B cell (primary cell): ENCODE measurements at regions of chr12 and their contacts with region 1.

Region 1: GRCh38 chr12:94817695-94818075 is 167.3 kb upstream of the TMCC3 start:
- DNase-seq: no peak
- ATAC-seq: no peak
- H3K4me3 ChIP-seq: peak overlapping the region; percentile 39 to 66 (median 51)
- H3K4me3 Mint-ChIP-seq: peak overlapping the region; percentile 83
- H3K27ac ChIP-seq: peak overlapping the region; percentile 86 to 90
- H3K27ac Mint-ChIP-seq: peak overlapping the region; percentile 95
- H3K4me1 ChIP-seq: peaks cover 60 to 62% of the 10 kb centered on the region in 2 donors
- H3K4me1 Mint-ChIP-seq: peaks cover 61% of the 10 kb centered on the region
- H3K27me3 ChIP-seq: no peaks in the 10 kb centered on the region
- H3K27me3 Mint-ChIP-seq: no peaks in the 10 kb centered on the region
- CTCF ChIP-seq: no peak

Region 2: DNA sequence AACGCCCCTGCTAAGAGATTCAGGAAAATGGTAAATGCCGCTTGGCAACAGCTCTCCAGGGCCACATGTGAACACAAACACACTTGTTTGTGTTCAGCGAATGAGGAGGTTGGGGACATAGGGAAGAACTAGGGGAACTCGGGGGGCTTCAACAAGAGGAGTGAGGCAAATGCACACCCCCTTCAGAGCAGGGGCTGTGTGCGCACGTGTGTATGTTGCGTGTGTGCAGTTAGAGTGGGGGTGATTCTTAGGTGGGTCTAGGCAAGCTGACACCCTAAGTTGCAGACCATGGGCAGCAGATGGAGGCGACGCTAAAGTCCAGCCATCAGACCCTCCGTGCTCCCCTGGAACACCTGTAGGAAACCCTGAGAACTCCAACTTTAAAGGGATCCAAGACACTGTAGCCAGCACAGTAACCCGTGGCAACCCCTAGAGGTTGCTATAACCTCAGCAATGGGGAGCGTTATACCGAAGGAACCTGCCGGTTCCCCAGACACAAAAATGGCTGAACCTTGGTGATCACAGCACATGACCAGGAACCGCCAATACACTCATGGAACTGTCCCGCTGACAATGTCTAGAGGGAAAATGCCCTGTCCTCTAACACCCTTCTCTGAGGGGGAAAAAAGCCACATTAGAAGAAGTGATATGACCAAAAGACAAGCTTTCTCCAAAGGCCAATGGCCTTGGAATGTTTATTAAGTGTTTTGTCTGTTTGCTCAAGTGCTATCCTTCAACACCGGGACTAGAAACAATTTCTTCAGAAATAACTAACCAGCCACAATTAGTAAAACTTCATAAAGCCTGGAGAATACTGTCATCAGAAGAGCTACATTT is 271.5 kb before region 1 on chr12:
- CTCF ChIA-PET with region 1: no interaction called
- POLR2A ChIA-PET with region 1: no interaction called
- intact Hi-C with region 1: no loop called
- DNase-seq: peak; percentile 18
- ATAC-seq: peak; percentile 43
- H3K4me3 ChIP-seq: no peak overlapping the region
- H3K4me3 Mint-ChIP-seq: no peak overlapping the region
- H3K27ac ChIP-seq: no peak overlapping the region
- H3K27ac Mint-ChIP-seq: no peak overlapping the region
- H3K4me1 ChIP-seq: no peaks in the 10 kb centered on the region
- H3K4me1 Mint-ChIP-seq: no peaks in the 10 kb centered on the region
- H3K27me3 ChIP-seq: no peaks in the 10 kb centered on the region
- H3K27me3 Mint-ChIP-seq: no peaks in the 10 kb centered on the region
- CTCF ChIP-seq: no peak

Region 3: GRCh38 chr12:94660436-94660835 is 157.2 kb before region 1 on chr12:
- CTCF ChIA-PET with region 1: no interaction called
- POLR2A ChIA-PET with region 1: no interaction called
- intact Hi-C with region 1: no loop called
- DNase-seq: no peak
- ATAC-seq: no peak
- H3K4me3 ChIP-seq: no peak overlapping the region
- H3K4me3 Mint-ChIP-seq: no peak overlapping the region
- H3K27ac ChIP-seq: no peak overlapping the region
- H3K27ac Mint-ChIP-seq: no peak overlapping the region
- H3K4me1 ChIP-seq: peaks cover 7 to 11% of the 10 kb centered on the region in 2 donors
- H3K4me1 Mint-ChIP-seq: peaks cover 12% of the 10 kb centered on the region
- H3K27me3 ChIP-seq: no peaks in the 10 kb centered on the region
- H3K27me3 Mint-ChIP-seq: no peaks in the 10 kb centered on the region
- CTCF ChIP-seq: no peak

Region 4: DNA sequence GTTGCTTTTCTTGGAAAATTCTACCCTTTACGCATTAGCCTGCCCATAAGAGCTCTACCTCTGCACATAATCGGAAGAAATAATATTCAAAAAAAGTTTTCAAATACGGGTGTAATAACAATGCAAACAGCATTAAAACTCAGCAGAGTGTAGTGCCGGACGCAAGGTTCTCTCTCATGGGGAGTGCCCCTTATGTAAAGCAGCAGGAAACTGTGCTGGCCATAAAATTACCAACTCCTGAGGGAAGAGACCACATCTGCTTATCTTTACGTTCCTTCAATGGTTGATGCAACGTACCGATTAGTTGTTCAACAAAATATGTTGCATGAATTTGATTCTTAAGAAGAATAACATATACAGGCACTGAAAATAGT is 48.7 kb before region 1 on chr12:
- CTCF ChIA-PET with region 1: interaction called, 7 read pairs
- POLR2A ChIA-PET with region 1: interaction called, 4 read pairs
- intact Hi-C with region 1: loop called (anchors 1 kb)
- DNase-seq: peak; percentile 74
- ATAC-seq: peak; percentile 89
- H3K4me3 ChIP-seq: peak overlapping the region; percentile 36 to 60 (median 54)
- H3K4me3 Mint-ChIP-seq: peak overlapping the region; percentile 90
- H3K27ac ChIP-seq: peak overlapping the region; percentile 69 to 70
- H3K27ac Mint-ChIP-seq: peak overlapping the region; percentile 82
- H3K4me1 ChIP-seq: peaks cover 50 to 54% of the 10 kb centered on the region in 2 donors
- H3K4me1 Mint-ChIP-seq: peaks cover 63% of the 10 kb centered on the region
- H3K27me3 ChIP-seq: no peaks in the 10 kb centered on the region
- H3K27me3 Mint-ChIP-seq: no peaks in the 10 kb centered on the region
- CTCF ChIP-seq: no peak

Region 5: GRCh38 chr12:94831081-94831751 is 13.5 kb after region 1 on chr12:
- CTCF ChIA-PET with region 1: interaction called, 7 read pairs
- POLR2A ChIA-PET with region 1: interaction called, 3 read pairs
- intact Hi-C with region 1: loop called (anchors 1 kb)
- DNase-seq: peak; percentile 86
- ATAC-seq: peak; percentile 94
- H3K4me3 ChIP-seq: peak overlapping the region in 2 of 5 experiments; percentile 5 to 23
- H3K4me3 Mint-ChIP-seq: peak overlapping the region; percentile 95
- H3K27ac ChIP-seq: peak overlapping the region; percentile 92 to 94
- H3K27ac Mint-ChIP-seq: peak overlapping the region; percentile 100
- H3K4me1 ChIP-seq: peaks cover 39% of the 10 kb centered on the region in 2 donors
- H3K4me1 Mint-ChIP-seq: peaks cover 47% of the 10 kb centered on the region
- H3K27me3 ChIP-seq: no peaks in the 10 kb centered on the region
- H3K27me3 Mint-ChIP-seq: no peaks in the 10 kb centered on the region
- CTCF ChIP-seq: no peak

Region 6: DNA sequence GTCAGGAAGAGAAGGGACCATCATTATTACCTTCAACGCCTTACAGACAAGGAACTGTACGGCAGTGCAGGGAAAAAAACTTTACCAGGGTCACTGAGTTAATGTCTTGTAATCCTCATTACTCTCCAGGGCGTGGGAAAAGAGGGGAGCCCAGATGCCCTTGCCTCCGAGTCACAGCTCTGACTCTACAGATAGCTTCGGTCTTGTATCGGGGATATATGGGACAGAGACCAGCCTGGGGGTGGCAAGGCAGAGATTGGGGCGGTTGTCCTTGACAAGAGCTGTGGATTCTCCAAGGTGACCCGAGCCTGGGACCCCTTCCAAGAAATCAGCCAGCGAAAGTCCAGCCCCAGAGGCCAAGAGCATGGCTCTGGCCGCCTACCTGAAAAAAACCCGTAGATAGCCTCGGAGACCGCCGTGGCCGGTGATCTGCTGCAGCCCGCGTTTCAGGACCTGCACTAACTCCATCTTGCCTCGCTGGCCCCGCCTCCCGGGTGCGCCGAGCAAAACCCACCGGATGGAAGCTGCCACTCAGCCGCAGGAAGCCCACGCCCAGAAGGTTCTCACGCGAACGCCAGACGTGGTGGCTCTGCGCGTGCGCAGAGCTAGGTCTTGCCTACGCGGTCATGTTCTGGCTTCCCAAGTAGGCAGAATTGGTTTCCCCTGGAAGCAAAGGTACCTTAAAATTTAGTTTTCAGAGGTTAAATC is 185.7 kb after region 1 on chr12 and contains the start of gene NDUFA12:
- CTCF ChIA-PET with region 1: no interaction called
- POLR2A ChIA-PET with region 1: no interaction called
- intact Hi-C with region 1: loop called (anchors 5 kb)
- DNase-seq: peak; percentile 96
- ATAC-seq: peak; percentile 100
- H3K4me3 ChIP-seq: peak within 1 kb of the TSS; percentile 75 to 98 (median 81)
- H3K4me3 Mint-ChIP-seq: peak within 1 kb of the TSS; percentile 98
- H3K27ac ChIP-seq: peak within 1 kb of the TSS; percentile 82
- H3K27ac Mint-ChIP-seq: peak within 1 kb of the TSS; percentile 98
- H3K4me1 ChIP-seq: peaks cover 15 to 24% of the 10 kb centered on the region in 2 donors
- H3K4me1 Mint-ChIP-seq: peaks cover 38% of the 10 kb centered on the region
- H3K27me3 ChIP-seq: no peaks in the 10 kb centered on the region
- H3K27me3 Mint-ChIP-seq: no peaks in the 10 kb centered on the region
- CTCF ChIP-seq: no peak
- total RNA-seq, gene NDUFA12: 41.7 and 42.0 TPM in 2 replicates